Posterior cingulate gyrus (tissue), 11 donors: ENCODE measurements at regions of chr9 and their contacts with region 1.

Region 1: GRCh38 chr9:122125158-122125508 is 32.0 kb upstream of the TTLL11 start:
- DNase-seq: peak; percentile 75 to 99 (median 90)

Region 2: GRCh38 chr9:121545875-121546423 is 579.2 kb before region 1 on chr9:
- intact Hi-C with region 1: loop called (anchors 10 kb)
- DNase-seq: peak; percentile 79 to 99 (median 94)

Region 3: GRCh38 chr9:122056484-122056883 is 68.6 kb before region 1 on chr9:
- intact Hi-C with region 1: no loop called
- DNase-seq: no peak

Region 4: DNA sequence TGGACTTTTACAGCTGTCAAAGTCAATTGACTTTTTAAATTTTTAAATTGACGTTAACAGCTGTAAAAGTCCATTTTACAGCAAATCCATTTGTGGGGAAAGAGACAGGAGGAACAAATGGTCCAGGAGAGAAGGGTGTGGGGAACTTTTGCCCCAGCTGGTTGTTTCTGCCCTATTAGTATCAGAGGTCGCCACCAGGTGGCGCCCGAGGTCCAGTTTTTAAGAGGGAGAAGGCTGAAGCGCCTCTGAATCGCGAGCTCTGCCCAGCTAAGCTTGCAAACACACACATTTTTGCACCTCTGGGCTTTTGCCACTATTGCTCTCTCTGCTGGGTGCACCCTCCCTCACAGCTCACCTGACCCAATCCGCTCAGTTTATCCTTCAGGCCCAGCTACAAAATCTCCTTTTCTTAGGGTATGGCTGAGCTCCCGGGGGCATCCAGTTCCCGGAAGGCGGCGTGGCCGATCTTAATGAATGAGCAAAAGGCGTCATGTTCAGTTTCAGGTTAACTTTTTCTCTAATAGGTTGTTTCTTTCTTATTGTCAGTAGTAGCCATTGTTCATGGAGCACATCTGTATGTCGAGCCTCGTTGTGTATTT is 25.8 kb before region 1 on chr9:
- intact Hi-C with region 1: loop called (anchors 1 kb)
- DNase-seq: peak; percentile 64 to 97 (median 88)

Region 5: GRCh38 chr9:122264360-122265148 is 139.4 kb after region 1 on chr9 and contains the starts of genes MRRF and RBM18:
- intact Hi-C with region 1: loop called (anchors 10 kb)
- DNase-seq: peak; percentile 83 to 98 (median 88)

Region 6: GRCh38 chr9:122350638-122351355 is 225.7 kb after region 1 on chr9:
- intact Hi-C with region 1: loop called (anchors 1 kb)
- DNase-seq: peak; percentile 80 to 99 (median 90)

Region 7: GRCh38 chr9:122453677-122454135 is 328.6 kb after region 1 on chr9:
- intact Hi-C with region 1: loop called (anchors 5 kb)
- DNase-seq: no peak

Region 8: GRCh38 chr9:122810306-122810946 is 685.3 kb after region 1 on chr9:
- intact Hi-C with region 1: loop called (anchors 10 kb)
- DNase-seq: peak; percentile 64 to 96 (median 84)